ENCODE measurements at regions of chr20 and their contacts with region 1.

Region 1: DNA sequence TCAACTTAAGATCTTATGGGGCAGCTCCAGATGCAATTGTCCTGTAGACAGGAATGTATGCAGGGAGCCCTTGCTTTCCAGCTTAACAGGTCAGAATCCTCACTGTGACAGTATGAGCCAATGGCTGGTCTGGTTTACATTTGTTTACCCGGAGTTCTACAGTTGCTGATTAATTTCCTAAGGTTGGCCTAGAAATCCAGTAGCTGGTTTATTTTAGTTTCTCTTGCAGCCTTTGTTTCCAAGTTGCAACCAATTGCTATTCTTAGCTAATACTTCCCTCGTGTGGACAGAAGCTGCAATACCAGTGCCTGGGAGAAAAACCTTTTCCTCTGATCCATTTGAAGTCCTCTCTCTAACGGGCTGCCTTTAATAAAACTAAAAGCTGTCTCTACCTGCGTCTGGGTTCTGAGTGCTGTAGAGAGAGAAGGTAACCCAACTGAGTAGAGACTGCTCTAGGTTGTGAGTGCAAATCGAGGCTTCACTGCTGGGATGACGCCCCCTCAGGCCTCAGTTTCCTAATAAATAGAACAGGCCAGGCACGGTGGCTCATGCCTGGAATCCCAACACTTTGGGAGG is 45.9 kb downstream of the ZNF217 start:
- DNase-seq: peak in 9 of 14 experiments; percentile 3 to 61 (median 26)
- ATAC-seq: peak; percentile 67
- H3K4me3 ChIP-seq: no peak overlapping the region
- H3K4me3 Mint-ChIP-seq: no peak overlapping the region
- H3K27ac ChIP-seq: no peak overlapping the region
- H3K27ac Mint-ChIP-seq: no peak overlapping the region
- H3K4me1 ChIP-seq: no peaks in the 10 kb centered on the region
- H3K4me1 Mint-ChIP-seq: peaks cover 5% of the 10 kb centered on the region
- H3K27me3 ChIP-seq: no peaks in the 10 kb centered on the region
- H3K27me3 Mint-ChIP-seq: no peaks in the 10 kb centered on the region
- CTCF ChIP-seq: peak; percentile 66

Region 2: GRCh38 chr20:52127309-52127708 is 1420.4 kb before region 1 on chr20:
- CTCF ChIA-PET with region 1: no interaction called
- POLR2A ChIA-PET with region 1: interaction called, 5 read pairs
- intact Hi-C with region 1: loop called in 1 of 2 experiments (anchors 5 kb)
- DNase-seq: peak in 1 of 14 experiments; percentile 19
- ATAC-seq: no peak
- H3K4me3 ChIP-seq: no peak overlapping the region
- H3K4me3 Mint-ChIP-seq: no peak overlapping the region
- H3K27ac ChIP-seq: no peak overlapping the region
- H3K27ac Mint-ChIP-seq: no peak overlapping the region
- H3K4me1 ChIP-seq: no peaks in the 10 kb centered on the region
- H3K4me1 Mint-ChIP-seq: peaks cover 5% of the 10 kb centered on the region
- H3K27me3 ChIP-seq: no peaks in the 10 kb centered on the region
- H3K27me3 Mint-ChIP-seq: no peaks in the 10 kb centered on the region
- CTCF ChIP-seq: no peak

Region 3: DNA sequence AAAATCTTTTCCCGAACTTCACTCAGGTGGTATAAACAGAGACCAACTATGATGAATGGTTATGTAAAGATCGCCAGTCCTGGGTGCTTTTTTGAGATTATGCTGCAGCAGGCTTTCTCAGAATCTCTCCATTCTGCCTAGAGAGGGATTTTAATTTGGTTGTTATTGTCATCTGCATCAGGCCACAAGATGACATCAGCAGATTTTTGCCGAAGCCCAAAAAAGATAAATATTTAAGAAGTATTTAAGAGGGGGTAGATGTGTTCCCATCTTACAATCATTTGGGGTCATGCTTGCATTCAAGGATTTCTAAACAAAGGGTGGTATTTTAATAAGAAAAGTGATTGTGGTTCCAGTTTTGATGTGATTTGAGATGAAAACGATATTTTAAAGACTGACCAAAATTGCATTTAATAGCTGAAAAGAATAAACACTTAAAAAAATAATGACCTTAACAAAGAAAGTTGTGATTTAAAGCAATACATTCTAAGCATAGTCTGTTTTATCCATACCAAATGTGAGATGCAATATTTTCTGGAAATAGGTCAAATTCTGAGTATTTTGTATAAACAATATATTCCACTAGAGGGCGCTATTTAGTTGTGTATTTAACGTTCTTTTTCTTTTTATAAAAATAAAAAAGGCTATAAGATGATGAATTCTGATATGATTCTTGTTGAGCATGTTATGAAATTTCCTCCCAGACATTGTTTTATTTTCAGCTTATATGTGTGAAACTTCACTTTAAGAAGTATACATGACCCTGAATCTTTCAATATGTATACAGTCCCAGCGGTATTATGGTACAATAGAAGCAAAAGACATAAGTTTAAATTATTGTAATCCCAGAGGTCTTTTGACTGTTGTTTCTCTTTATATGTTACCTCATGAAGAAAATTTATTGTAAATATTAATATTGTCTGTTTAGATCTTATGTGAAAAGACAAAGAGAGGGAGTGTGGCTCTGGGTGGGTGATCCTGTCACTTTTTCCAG is 1305.2 kb before region 1 on chr20:
- CTCF ChIA-PET with region 1: no interaction called
- POLR2A ChIA-PET with region 1: no interaction called
- intact Hi-C with region 1: loop called (anchors 1 to 5 kb)
- DNase-seq: peak in 3 of 14 experiments; percentile 12 to 42 (median 34)
- ATAC-seq: no peak
- H3K4me3 ChIP-seq: no peak overlapping the region
- H3K4me3 Mint-ChIP-seq: no peak overlapping the region
- H3K27ac ChIP-seq: no peak overlapping the region
- H3K27ac Mint-ChIP-seq: no peak overlapping the region
- H3K4me1 ChIP-seq: no peaks in the 10 kb centered on the region
- H3K4me1 Mint-ChIP-seq: peaks cover 5% of the 10 kb centered on the region
- H3K27me3 ChIP-seq: no peaks in the 10 kb centered on the region
- H3K27me3 Mint-ChIP-seq: peaks cover 7% of the 10 kb centered on the region
- CTCF ChIP-seq: peak; percentile 83

Region 4: DNA sequence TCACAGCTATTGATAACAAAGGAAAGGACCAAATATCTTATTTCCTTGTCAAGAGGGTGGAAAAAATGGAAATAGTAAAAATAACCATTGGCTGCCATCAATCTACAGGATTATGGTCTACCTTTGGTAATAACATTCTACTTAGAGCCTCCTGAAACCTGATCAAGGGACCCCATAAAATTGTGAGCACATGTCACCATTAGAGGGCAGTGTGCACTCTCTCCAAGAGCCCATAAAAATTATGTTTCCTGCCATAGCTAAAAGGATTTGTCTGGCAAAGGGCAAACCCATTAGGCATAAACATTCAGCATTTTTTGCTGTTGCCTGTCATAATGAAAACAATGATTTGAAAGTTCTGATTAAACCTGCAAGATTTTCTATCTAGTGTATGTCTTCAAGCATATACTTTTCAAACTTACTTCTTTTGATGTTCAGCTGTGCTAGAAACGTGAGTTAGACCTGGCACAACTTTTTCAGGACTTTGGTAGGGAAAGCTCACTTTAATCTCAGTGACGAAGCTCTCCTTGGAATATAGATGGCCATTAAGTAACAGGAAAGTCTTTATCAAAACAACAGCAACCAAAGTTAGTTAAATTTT is 1235.5 kb before region 1 on chr20:
- CTCF ChIA-PET with region 1: interaction called, 8 read pairs
- POLR2A ChIA-PET with region 1: no interaction called
- intact Hi-C with region 1: loop called (anchors 5 kb)
- DNase-seq: peak in 13 of 14 experiments; percentile 20 to 83 (median 47)
- ATAC-seq: peak; percentile 73
- H3K4me3 ChIP-seq: no peak overlapping the region
- H3K4me3 Mint-ChIP-seq: no peak overlapping the region
- H3K27ac ChIP-seq: no peak overlapping the region
- H3K27ac Mint-ChIP-seq: no peak overlapping the region
- H3K4me1 ChIP-seq: peaks cover 4% of the 10 kb centered on the region
- H3K4me1 Mint-ChIP-seq: peaks cover 38% of the 10 kb centered on the region
- H3K27me3 ChIP-seq: no peaks in the 10 kb centered on the region
- H3K27me3 Mint-ChIP-seq: no peaks in the 10 kb centered on the region
- CTCF ChIP-seq: peak; percentile 88

Region 5: DNA sequence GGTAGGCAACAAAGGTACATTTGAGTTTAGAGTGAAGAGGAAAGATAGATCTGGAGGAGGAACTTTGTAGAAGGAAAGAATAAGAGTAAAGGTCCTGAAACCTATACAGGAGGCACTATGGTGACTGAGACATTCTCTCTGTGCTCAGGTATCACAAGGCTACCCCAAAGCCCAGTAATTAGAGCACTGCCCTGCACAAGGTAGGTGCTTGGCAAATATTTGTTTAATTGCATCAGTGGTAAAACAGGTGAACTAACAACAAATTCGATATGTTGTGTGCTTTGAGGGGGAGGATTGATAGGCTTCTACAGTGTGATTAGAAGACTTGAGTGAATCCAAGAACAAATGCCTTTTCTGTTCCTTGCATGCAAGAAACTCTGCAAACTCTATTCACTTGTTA is 582.4 kb before region 1 on chr20:
- CTCF ChIA-PET with region 1: no interaction called
- POLR2A ChIA-PET with region 1: no interaction called
- intact Hi-C with region 1: loop called in 1 of 2 experiments (anchors 10 kb)
- DNase-seq: no peak
- ATAC-seq: no peak
- H3K4me3 ChIP-seq: no peak overlapping the region
- H3K4me3 Mint-ChIP-seq: no peak overlapping the region
- H3K27ac ChIP-seq: no peak overlapping the region
- H3K27ac Mint-ChIP-seq: no peak overlapping the region
- H3K4me1 ChIP-seq: no peaks in the 10 kb centered on the region
- H3K4me1 Mint-ChIP-seq: peaks cover 8% of the 10 kb centered on the region
- H3K27me3 ChIP-seq: peaks cover 0 to 3% of the 10 kb centered on the region in 2 experiments
- H3K27me3 Mint-ChIP-seq: peaks cover 8% of the 10 kb centered on the region
- CTCF ChIP-seq: no peak

Region 6: DNA sequence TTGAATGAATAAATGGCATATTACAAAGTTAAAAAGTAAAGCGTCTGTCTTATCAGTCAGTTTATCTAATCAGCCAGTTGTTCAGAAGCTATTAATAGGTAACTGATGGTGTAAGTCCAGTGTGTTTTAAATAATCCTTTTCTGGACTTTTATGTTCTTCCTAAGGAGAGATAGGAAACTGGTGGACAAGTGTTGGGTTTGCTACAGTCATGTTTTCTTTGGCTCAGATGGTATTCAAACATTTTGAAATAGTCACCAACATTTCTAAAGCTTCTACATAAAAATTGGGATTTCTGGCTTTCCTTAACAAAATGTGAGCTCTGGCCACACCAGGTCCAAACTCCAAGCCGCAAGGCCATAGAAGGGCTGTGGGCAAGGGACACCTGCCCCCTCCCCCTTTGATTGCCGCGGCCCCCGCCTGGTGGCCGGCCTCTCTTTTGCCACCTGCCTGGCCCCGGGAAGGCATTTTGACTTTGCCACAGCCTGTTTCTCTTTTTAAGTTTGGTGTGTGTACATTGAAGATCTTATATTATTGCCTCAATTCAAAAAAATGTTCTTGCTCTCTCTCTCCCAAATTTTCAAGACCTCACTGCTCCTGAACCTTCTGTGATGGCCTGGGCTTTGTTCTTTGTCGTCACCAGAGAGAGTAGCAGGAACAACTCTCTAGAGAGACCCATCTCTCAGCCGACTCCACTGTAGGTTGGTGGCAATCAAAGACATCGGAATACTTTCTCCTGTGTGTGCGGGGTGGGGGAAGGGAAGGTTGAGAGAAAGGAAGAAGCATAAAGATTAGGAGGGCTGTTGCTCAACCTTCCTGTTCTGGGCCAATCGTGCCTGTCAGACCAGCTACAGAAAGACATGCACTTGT is 129.9 kb after region 1 on chr20:
- CTCF ChIA-PET with region 1: no interaction called
- POLR2A ChIA-PET with region 1: no interaction called
- intact Hi-C with region 1: no loop called
- DNase-seq: peak in 5 of 14 experiments; percentile 19 to 63 (median 41)
- ATAC-seq: peak; percentile 58
- H3K4me3 ChIP-seq: peak overlapping the region; percentile 2
- H3K4me3 Mint-ChIP-seq: peak overlapping the region; percentile 47
- H3K27ac ChIP-seq: no peak overlapping the region
- H3K27ac Mint-ChIP-seq: peak overlapping the region; percentile 76
- H3K4me1 ChIP-seq: peaks cover 6% of the 10 kb centered on the region
- H3K4me1 Mint-ChIP-seq: peaks cover 32% of the 10 kb centered on the region
- H3K27me3 ChIP-seq: no peaks in the 10 kb centered on the region
- H3K27me3 Mint-ChIP-seq: no peaks in the 10 kb centered on the region
- CTCF ChIP-seq: no peak

Measured in CD4-positive, alpha-beta T cell (primary cell).